ENCODE measurements at regions of chr11 and their contacts with region 1.

Region 1: DNA sequence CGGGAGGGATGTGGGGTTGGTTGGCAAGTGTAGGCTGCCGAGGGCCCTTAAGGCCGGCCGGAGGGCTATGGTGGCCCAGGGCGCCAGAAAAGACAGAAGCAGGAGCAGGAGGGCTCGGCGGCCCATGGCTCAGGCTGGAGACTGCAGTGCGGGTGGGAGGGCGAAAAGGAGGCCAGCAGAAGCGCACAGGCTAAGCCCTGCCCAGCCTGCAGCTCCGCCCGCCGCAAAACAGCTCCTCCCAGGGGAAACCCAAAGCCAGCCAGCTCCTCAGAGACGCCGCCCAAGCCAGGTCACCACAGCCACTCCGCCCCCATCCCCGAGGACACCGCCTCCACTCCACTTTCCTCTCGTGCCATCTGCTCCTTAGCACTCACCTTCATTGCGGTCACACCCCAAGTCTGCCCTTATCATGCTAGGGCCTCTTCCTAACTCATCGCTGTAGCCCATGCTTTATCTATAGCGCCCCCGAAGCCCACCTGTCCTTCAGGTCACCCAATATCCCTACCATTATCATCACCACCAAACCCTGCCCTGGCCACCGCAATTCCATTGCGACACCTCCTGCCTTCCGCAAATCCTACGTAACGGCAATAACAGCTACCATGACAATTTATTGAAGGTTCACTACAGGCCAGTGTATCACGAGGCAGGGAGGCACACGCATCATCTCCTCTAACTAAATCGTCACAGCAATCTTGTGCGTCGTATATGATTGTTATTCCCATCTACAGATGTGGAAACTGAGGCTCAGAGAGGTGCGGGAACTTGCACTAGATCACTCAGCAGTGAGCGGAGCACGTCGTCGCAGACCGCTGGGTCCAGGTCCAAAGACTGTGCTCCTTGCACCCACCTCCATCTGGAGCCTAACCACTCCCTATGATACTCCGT is at the start of gene PRCP:
- DNase-seq: peak; percentile 93
- H3K4me3 Mint-ChIP-seq: peak within 1 kb of the TSS; percentile 99
- H3K27ac Mint-ChIP-seq: peak within 1 kb of the TSS; percentile 100
- H3K4me1 Mint-ChIP-seq: peaks cover 70% of the 10 kb centered on the region
- H3K27me3 Mint-ChIP-seq: no peaks in the 10 kb centered on the region
- total RNA-seq, gene PRCP: 22.7 and 24.0 TPM in 2 replicates

Region 2: GRCh38 chr11:82873919-82874333 is 26.6 kb before region 1 on chr11:
- intact Hi-C with region 1: loop called (anchors 1 kb)
- DNase-seq: no peak
- H3K4me3 Mint-ChIP-seq: no peak overlapping the region
- H3K27ac Mint-ChIP-seq: peak overlapping the region; percentile 0
- H3K4me1 Mint-ChIP-seq: peaks cover 24% of the 10 kb centered on the region
- H3K27me3 Mint-ChIP-seq: no peaks in the 10 kb centered on the region

Region 3: GRCh38 chr11:82959987-82960778 is 59.7 kb after region 1 on chr11:
- intact Hi-C with region 1: loop called (anchors 1 kb)
- DNase-seq: peak; percentile 42
- H3K4me3 Mint-ChIP-seq: peak overlapping the region; percentile 68
- H3K27ac Mint-ChIP-seq: peak overlapping the region; percentile 91
- H3K4me1 Mint-ChIP-seq: peaks cover 59% of the 10 kb centered on the region
- H3K27me3 Mint-ChIP-seq: no peaks in the 10 kb centered on the region

Region 4: DNA sequence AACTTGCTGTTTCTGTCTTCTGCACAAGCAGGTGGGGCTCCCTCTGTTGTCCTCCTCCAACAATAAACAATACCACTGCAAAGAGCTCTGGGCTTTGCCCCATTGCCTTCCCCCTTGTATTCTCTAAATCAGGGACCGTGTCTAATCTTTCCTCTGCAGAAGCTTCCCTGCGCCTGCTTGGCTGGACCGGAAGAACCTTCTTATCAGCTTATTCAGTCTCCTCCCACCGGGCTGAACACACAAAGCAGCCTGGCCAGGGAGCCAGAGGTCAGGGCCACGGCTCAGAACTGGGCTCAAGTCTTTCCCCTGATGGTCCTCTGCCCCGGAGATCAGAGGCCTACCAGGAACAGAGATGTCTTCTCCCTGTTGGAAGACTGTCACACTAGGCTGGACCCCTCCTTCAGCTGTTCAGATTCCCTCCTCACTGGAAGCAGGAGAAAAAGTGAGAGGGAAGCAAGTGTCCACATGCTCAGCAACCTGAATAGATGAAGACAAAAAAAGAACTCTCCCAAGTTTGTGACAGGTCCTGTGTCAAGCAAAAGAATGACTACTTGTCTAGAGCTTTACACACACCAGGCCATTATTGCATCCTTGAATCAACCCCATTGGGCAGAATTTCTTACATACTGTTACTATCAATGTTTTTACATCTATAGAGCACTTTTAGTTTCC is 107.5 kb after region 1 on chr11:
- intact Hi-C with region 1: loop called (anchors 2 kb)
- DNase-seq: no peak
- H3K4me3 Mint-ChIP-seq: no peak overlapping the region
- H3K27ac Mint-ChIP-seq: no peak overlapping the region
- H3K4me1 Mint-ChIP-seq: peaks cover 57% of the 10 kb centered on the region
- H3K27me3 Mint-ChIP-seq: no peaks in the 10 kb centered on the region

Region 5: DNA sequence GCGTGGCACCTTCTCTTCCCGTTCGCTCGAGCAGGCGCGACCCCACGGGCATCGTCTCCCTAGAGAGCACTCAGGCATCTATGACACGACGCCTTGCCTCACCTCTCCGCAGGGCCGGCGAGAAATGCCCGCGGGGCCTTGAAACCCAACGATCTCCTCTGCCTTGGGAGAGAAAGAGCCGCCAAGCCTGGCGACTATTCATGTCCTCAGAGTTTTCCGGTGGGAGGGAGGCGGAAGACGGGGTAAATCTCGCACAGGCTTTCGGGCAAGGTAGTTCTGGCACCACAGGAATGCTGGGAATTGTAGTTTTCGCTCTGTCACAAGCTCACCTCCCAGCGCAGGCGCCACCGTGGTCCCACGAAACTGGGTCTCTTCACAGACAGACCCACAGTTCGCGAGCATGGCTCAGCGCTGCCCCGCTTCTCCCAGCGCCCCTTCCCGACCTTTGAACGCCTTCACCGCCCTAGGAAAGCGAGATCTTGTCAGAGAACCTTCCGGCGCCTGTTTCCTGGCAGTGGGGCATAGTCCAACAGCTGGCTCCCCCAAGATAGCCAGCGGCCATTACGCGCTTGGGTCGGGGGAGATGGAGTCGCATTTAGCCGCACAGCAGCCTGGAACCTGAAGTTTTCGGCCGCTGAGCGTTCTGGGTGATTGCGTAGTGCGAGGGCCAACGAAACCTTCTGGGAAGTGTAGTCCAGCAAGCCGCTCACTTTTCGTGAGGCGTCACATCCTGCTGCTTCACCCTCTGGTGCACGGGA is 385.4 kb after region 1 on chr11 and contains the start of gene CCDC90B:
- intact Hi-C with region 1: loop called (anchors 1 kb)
- DNase-seq: peak; percentile 91
- H3K4me3 Mint-ChIP-seq: peak within 1 kb of the TSS; percentile 96
- H3K27ac Mint-ChIP-seq: peak within 1 kb of the TSS; percentile 95
- H3K4me1 Mint-ChIP-seq: peaks cover 21% of the 10 kb centered on the region
- H3K27me3 Mint-ChIP-seq: peaks cover 4% of the 10 kb centered on the region
- total RNA-seq, gene CCDC90B: 24.2 and 24.5 TPM in 2 replicates